ENCODE measurements at regions of chr15 and their contacts with region 1.

Region 1: GRCh38 chr15:71800835-71801745 is 9.3 kb upstream of the NR2E3 start:
- DNase-seq: peak; percentile 75
- H3K4me3 ChIP-seq: no peak overlapping the region
- H3K27ac ChIP-seq: no peak overlapping the region
- H3K4me1 ChIP-seq: no peaks in the 10 kb centered on the region
- H3K27me3 ChIP-seq: no peaks in the 10 kb centered on the region
- CTCF ChIP-seq: peak; percentile 78

Region 2: GRCh38 chr15:71294886-71295638 is 506.0 kb before region 1 on chr15:
- CTCF ChIA-PET with region 1: no interaction called
- POLR2A ChIA-PET with region 1: no interaction called
- intact Hi-C with region 1: no loop called
- DNase-seq: peak; percentile 92
- H3K4me3 ChIP-seq: no peak overlapping the region
- H3K27ac ChIP-seq: peak overlapping the region; percentile 61
- H3K4me1 ChIP-seq: peaks cover 12% of the 10 kb centered on the region
- H3K27me3 ChIP-seq: no peaks in the 10 kb centered on the region
- CTCF ChIP-seq: no peak

Region 3: GRCh38 chr15:71386448-71387236 is 414.4 kb before region 1 on chr15:
- CTCF ChIA-PET with region 1: no interaction called
- POLR2A ChIA-PET with region 1: no interaction called
- intact Hi-C with region 1: loop called (anchors 5 kb)
- DNase-seq: peak; percentile 42
- H3K4me3 ChIP-seq: no peak overlapping the region
- H3K27ac ChIP-seq: no peak overlapping the region
- H3K4me1 ChIP-seq: peaks cover 28% of the 10 kb centered on the region
- H3K27me3 ChIP-seq: no peaks in the 10 kb centered on the region
- CTCF ChIP-seq: peak; percentile 64

Region 4: GRCh38 chr15:71448688-71449114 is 352.4 kb before region 1 on chr15:
- CTCF ChIA-PET with region 1: no interaction called
- POLR2A ChIA-PET with region 1: no interaction called
- intact Hi-C with region 1: loop called (anchors 5 kb)
- DNase-seq: peak; percentile 71
- H3K4me3 ChIP-seq: no peak overlapping the region
- H3K27ac ChIP-seq: no peak overlapping the region
- H3K4me1 ChIP-seq: no peaks in the 10 kb centered on the region
- H3K27me3 ChIP-seq: no peaks in the 10 kb centered on the region
- CTCF ChIP-seq: peak; percentile 81

Region 5: DNA sequence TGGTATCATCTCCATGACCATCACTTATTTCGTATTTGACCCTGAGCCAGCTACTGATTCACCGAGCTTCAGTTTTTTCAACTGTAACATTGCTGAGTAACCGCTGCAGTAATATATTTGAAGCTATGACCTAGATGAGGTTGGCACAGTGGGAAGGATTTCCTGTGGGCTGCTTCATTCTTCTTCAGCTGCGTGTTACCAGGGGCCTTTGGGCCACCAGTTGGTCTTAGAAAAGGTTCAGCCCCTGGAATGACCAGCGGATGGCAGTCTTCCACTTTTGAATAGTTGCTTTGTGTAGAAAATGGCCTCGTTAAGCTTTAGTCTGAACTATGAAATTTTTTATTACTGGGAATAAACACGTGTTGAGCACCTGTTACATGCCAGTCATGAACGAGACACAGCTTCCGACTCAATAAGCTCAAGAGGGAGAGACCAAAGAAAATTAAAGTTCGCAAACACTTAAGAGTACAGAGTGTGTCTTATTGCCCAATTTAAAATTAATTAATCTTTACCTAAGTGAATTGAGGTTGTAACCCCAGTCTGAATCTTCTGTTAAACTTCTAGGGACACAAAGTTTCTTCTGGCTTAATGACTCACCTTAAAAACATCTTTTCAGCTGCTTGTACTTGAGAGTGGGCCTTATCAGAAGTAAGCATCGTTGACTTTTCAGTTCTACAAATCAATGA is 48.3 kb before region 1 on chr15:
- CTCF ChIA-PET with region 1: interaction called, 3 read pairs
- POLR2A ChIA-PET with region 1: no interaction called
- intact Hi-C with region 1: loop called (anchors 5 kb)
- DNase-seq: peak; percentile 82
- H3K4me3 ChIP-seq: no peak overlapping the region
- H3K27ac ChIP-seq: no peak overlapping the region
- H3K4me1 ChIP-seq: no peaks in the 10 kb centered on the region
- H3K27me3 ChIP-seq: no peaks in the 10 kb centered on the region
- CTCF ChIP-seq: peak; percentile 72

Measured in A673 (cell line).